Activated B cell treated with CpG ODN at 0.5 μM for 24 hours (primary cell): ENCODE measurements at regions of chr14 and their contacts with region 1.

Region 1: DNA sequence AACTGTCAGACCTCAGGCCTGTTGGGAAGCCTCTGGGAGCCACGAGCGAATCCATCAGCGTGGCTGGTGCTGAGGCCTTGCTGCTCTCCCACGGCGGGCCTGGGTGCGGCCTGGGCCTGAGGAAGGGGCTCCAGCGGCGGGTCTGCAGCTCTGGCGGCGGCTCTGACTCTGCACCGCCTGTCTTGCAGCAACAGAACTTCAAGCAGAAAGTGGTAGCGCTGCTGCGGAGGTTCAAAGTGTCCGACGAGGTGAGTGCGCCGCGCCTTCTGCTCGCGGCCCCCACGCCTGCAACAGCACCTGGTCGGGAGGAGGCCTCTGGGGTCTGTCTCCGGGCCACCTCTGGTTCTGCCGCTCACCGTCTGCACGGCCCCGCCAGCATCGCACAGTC is 28.7 kb upstream of the TEX22 start:
- DNase-seq: no peak
- ATAC-seq: no peak
- H3K4me3 Mint-ChIP-seq: no peak overlapping the region
- H3K27ac Mint-ChIP-seq: no peak overlapping the region
- H3K4me1 Mint-ChIP-seq: peaks cover 7% of the 10 kb centered on the region
- H3K27me3 Mint-ChIP-seq: no peaks in the 10 kb centered on the region
- CTCF ChIP-seq: no peak

Region 2: GRCh38 chr14:105026803-105027563 is 342.7 kb before region 1 on chr14:
- CTCF ChIA-PET with region 1: no interaction called
- POLR2A ChIA-PET with region 1: no interaction called
- intact Hi-C with region 1: no loop called
- DNase-seq: no peak
- ATAC-seq: no peak
- H3K4me3 Mint-ChIP-seq: no peak overlapping the region
- H3K27ac Mint-ChIP-seq: no peak overlapping the region
- H3K4me1 Mint-ChIP-seq: peaks cover 32% of the 10 kb centered on the region
- H3K27me3 Mint-ChIP-seq: no peaks in the 10 kb centered on the region
- CTCF ChIP-seq: no peak

Region 3: GRCh38 chr14:105351920-105352851 is 17.5 kb before region 1 on chr14:
- CTCF ChIA-PET with region 1: no interaction called
- POLR2A ChIA-PET with region 1: no interaction called
- intact Hi-C with region 1: no loop called
- DNase-seq: peak; percentile 73
- ATAC-seq: peak; percentile 90
- H3K4me3 Mint-ChIP-seq: no peak overlapping the region
- H3K27ac Mint-ChIP-seq: peak overlapping the region; percentile 53
- H3K4me1 Mint-ChIP-seq: peaks cover 7% of the 10 kb centered on the region
- H3K27me3 Mint-ChIP-seq: no peaks in the 10 kb centered on the region
- CTCF ChIP-seq: no peak

Region 4: DNA sequence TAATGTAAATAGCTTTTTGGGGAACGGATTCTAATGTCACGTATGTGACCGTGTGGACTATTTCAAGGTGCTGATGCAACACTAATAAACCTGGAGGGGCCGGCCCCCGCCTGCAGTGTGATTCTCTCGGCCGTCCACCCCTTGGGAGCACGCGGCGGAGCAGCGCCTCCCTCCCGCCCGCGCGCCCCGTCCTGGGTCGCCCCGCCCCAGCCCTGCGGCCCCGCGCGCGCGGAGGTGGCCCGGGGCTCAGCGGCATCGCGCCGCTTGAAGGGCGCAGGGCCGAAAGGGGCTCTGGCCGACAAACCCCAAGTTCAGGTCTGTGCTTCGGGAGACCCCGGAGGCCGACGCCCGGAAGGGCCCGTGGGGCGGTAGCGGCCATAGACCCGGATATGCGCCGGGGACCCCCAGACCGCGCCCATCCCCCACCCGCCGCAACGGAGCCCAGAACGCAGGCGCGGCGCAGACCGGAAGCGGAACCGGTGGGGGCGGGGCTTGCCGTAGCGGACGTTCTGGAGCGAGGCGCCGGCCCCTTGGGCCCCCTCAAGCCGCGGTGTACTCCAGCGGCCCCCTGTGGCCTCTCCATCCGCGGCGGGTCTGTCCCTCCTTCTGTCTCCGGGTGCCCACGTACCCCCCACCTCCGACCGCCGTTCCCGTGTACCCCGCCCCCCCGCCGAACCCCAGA is 28.5 kb after region 1 on chr14 and contains the start of gene TEX22:
- CTCF ChIA-PET with region 1: interaction called, 8 read pairs
- POLR2A ChIA-PET with region 1: interaction called, 7 read pairs
- intact Hi-C with region 1: loop called (anchors 2 kb)
- DNase-seq: peak; percentile 99
- ATAC-seq: peak; percentile 86
- H3K4me3 Mint-ChIP-seq: peak within 1 kb of the TSS; percentile 90
- H3K27ac Mint-ChIP-seq: peak within 1 kb of the TSS; percentile 91
- H3K4me1 Mint-ChIP-seq: peaks cover 24% of the 10 kb centered on the region
- H3K27me3 Mint-ChIP-seq: no peaks in the 10 kb centered on the region
- CTCF ChIP-seq: no peak
- total RNA-seq, gene TEX22: 2.8 and 5.7 TPM in 2 replicates

Region 5: GRCh38 chr14:105414456-105415371 is 45.1 kb after region 1 on chr14:
- CTCF ChIA-PET with region 1: no interaction called
- POLR2A ChIA-PET with region 1: no interaction called
- intact Hi-C with region 1: loop called (anchors 1 kb)
- DNase-seq: peak; percentile 65
- ATAC-seq: peak; percentile 80
- H3K4me3 Mint-ChIP-seq: peak overlapping the region; percentile 68
- H3K27ac Mint-ChIP-seq: no peak overlapping the region
- H3K4me1 Mint-ChIP-seq: peaks cover 14% of the 10 kb centered on the region
- H3K27me3 Mint-ChIP-seq: peaks cover 12% of the 10 kb centered on the region
- CTCF ChIP-seq: no peak

Region 6: DNA sequence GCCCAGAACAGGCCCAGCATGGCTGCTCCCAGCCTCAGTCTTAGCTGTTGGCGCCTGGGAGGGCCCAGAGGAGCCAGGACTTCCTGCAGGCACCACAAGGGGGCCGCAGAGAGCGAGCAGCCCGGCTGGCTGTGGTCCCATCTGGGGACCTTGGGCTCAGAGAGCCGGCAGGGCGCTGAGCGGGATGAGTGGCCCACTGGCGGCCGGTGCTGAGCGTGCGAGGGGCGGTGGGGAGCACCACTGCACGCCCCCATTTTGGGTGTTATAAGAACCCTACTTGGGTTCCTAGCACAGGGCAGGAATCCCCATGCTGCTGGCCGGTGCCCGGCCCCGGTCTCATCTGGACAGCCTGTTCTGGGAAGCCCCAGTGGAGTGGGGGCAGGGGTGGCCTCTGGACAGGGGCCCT is 79.1 kb after region 1 on chr14:
- CTCF ChIA-PET with region 1: interaction called, 5 read pairs
- POLR2A ChIA-PET with region 1: no interaction called
- intact Hi-C with region 1: loop called (anchors 1 kb)
- DNase-seq: peak; percentile 63
- ATAC-seq: peak; percentile 97
- H3K4me3 Mint-ChIP-seq: no peak overlapping the region
- H3K27ac Mint-ChIP-seq: no peak overlapping the region
- H3K4me1 Mint-ChIP-seq: no peaks in the 10 kb centered on the region
- H3K27me3 Mint-ChIP-seq: no peaks in the 10 kb centered on the region
- CTCF ChIP-seq: peak; percentile 20

Region 7: GRCh38 chr14:105480952-105481801 is 111.5 kb after region 1 on chr14:
- CTCF ChIA-PET with region 1: interaction called, 15 read pairs
- POLR2A ChIA-PET with region 1: no interaction called
- intact Hi-C with region 1: no loop called
- DNase-seq: peak; percentile 93
- ATAC-seq: peak; percentile 60
- H3K4me3 Mint-ChIP-seq: peak overlapping the region; percentile 75
- H3K27ac Mint-ChIP-seq: peak overlapping the region; percentile 94
- H3K4me1 Mint-ChIP-seq: peaks cover 73% of the 10 kb centered on the region
- H3K27me3 Mint-ChIP-seq: peaks cover 3% of the 10 kb centered on the region
- CTCF ChIP-seq: peak; percentile 49

Region 8: DNA sequence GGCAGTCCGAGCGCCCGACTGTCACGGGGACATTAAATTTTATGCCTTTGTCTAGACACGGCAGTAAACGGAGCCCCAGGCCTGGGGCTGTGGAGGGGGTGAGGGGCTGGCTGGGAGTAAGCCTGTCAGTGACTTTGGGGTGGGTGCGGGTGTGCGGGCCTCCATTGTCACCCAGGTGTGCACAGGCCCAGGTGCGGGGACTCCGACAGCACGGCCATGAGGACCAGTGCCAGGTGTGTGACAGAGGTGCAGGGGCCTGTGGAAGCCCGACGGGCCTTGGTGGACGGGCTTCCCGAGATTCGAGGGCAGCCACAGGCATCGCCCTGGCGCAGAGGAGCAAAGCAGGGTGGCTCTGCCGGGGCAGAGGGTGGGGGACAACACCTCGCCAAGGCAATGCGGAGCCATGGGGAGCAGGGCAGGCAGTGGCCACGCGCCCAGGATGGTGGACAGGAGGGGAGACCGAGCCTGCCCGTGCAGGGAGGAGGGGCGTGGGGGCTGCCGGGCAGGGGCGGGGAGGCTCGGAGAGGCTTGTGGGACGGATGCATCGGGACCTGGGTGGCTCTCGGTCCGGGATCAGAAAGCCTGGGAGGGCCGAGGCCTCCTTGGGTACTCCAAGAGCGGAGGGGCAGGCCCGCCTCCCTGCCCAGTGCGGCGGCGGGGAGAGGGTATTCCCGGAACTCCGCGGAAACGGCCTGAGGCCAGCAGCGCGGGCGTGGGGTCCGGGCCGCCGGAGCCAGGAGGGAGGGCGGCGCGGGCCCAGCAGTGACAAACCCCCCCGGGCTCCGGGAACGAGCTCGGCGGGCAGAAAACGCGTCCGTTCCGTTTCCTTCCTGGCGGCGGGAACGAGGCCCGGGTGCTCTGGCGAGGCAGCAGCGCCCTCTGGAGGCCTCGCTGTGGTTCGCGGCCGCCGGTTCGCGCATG is 158.3 kb after region 1 on chr14:
- CTCF ChIA-PET with region 1: interaction called, 25 read pairs
- POLR2A ChIA-PET with region 1: interaction called, 4 read pairs
- intact Hi-C with region 1: loop called (anchors 1 kb)
- DNase-seq: peak; percentile 82
- ATAC-seq: peak; percentile 47
- H3K4me3 Mint-ChIP-seq: peak overlapping the region; percentile 68
- H3K27ac Mint-ChIP-seq: no peak overlapping the region
- H3K4me1 Mint-ChIP-seq: peaks cover 44% of the 10 kb centered on the region
- H3K27me3 Mint-ChIP-seq: peaks cover 4% of the 10 kb centered on the region
- CTCF ChIP-seq: no peak